Calu3 (cell line): ENCODE measurements at regions of chr6 and their contacts with region 1.

Region 1: GRCh38 chr6:27893059-27893835 is 18.9 kb downstream of the OR2B2 start:
- DNase-seq: peak; percentile 94
- H3K4me3 Mint-ChIP-seq: no peak overlapping the region
- H3K27ac Mint-ChIP-seq: no peak overlapping the region
- H3K4me1 Mint-ChIP-seq: peaks cover 19% of the 10 kb centered on the region
- H3K27me3 Mint-ChIP-seq: no peaks in the 10 kb centered on the region
- CTCF ChIP-seq: no peak

Region 2: DNA sequence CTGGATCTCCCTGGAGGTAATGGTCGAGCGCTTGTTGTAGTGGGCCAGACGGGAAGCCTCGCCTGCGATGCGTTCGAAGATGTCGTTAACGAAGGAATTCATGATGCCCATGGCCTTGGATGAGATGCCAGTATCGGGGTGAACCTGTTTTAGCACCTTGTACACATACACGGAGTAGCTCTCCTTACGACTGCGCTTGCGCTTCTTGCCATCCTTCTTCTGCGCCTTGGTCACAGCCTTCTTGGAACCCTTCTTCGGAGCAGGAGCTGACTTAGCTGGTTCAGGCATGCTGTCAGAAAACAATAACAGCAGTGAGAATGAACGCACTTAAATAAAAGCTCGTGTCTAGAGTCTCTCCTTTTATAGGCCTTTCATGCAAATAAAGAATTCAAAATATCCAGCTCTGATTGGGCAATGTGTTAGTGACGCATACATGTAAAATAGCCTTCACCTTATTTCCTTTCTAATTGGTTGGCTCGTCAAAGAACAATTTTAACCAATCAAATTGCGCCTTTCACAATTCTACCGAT is 1676.8 kb before region 1 on chr6:
- CTCF ChIA-PET with region 1: no interaction called
- intact Hi-C with region 1: loop called (anchors 5 kb)
- DNase-seq: peak; percentile 86
- H3K4me3 Mint-ChIP-seq: no peak overlapping the region
- H3K27ac Mint-ChIP-seq: no peak overlapping the region
- H3K4me1 Mint-ChIP-seq: peaks cover 53% of the 10 kb centered on the region
- H3K27me3 Mint-ChIP-seq: no peaks in the 10 kb centered on the region
- CTCF ChIP-seq: no peak

Region 3: DNA sequence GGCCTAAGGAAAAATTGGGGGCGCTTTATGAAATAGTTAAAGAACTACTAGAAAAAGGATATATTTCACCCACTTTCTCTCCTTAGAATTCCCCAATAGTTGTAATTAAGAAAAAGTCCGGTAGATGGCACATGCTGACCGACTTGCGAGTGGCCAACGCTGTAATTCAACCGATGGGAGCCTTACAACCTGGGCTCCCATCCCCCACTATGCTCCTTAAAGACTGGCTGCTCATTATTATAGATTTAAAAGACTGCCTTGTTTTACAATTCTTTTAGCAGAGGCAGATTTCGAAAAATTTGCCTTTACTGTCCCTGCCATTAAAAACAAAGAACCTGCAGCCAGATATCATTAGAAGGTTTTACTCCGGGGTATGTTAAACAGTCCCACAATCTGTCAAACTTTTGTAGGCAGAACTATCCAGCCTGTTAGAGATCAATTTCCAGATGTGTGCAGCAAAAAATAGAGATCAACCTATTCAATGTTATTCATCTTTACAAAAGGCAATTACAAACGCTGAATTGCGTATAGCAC is 704.3 kb before region 1 on chr6:
- CTCF ChIA-PET with region 1: no interaction called
- intact Hi-C with region 1: loop called (anchors 5 kb)
- DNase-seq: peak; percentile 79
- H3K4me3 Mint-ChIP-seq: peak overlapping the region; percentile 78
- H3K27ac Mint-ChIP-seq: peak overlapping the region; percentile 55
- H3K4me1 Mint-ChIP-seq: peaks cover 9% of the 10 kb centered on the region
- H3K27me3 Mint-ChIP-seq: no peaks in the 10 kb centered on the region
- CTCF ChIP-seq: peak; percentile 71

Region 4: DNA sequence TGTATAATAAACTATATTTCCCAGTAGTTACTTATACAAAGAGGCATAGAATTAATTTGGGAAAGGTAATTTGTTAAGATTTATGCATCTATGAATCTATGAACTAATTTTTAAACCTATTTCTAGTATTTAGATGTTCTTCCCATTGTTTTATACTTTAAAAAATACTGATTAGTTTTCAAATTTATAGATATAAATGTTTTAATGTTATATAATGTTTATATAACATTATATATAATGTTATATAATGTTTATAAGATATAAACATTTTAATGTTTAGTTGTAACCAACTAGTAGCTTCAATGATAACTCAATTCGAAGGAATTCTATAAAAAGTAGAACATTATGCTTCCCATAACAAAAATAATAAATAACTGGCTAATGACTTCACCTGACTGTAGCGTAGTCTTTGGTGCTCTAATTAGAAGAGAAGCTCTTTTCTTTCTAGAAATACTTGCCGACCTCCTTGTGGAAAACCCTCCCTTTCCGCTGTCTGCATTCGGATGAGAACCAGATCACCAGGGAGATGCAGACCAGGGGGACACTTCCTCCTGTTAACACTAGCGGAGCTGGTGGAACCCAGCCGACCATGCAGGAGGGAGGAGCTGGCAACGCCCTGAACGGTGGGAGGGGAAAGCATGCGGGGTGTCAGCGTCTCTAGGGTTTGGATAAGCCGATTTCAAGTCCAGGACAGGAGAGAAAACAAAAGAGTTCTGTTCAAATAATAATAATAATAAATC is 139.4 kb before region 1 on chr6:
- CTCF ChIA-PET with region 1: interaction called, 5 read pairs
- intact Hi-C with region 1: loop called (anchors 5 kb)
- DNase-seq: peak; percentile 87
- H3K4me3 Mint-ChIP-seq: peak overlapping the region; percentile 79
- H3K27ac Mint-ChIP-seq: peak overlapping the region; percentile 88
- H3K4me1 Mint-ChIP-seq: peaks cover 33% of the 10 kb centered on the region
- H3K27me3 Mint-ChIP-seq: no peaks in the 10 kb centered on the region
- CTCF ChIP-seq: no peak

Region 5: DNA sequence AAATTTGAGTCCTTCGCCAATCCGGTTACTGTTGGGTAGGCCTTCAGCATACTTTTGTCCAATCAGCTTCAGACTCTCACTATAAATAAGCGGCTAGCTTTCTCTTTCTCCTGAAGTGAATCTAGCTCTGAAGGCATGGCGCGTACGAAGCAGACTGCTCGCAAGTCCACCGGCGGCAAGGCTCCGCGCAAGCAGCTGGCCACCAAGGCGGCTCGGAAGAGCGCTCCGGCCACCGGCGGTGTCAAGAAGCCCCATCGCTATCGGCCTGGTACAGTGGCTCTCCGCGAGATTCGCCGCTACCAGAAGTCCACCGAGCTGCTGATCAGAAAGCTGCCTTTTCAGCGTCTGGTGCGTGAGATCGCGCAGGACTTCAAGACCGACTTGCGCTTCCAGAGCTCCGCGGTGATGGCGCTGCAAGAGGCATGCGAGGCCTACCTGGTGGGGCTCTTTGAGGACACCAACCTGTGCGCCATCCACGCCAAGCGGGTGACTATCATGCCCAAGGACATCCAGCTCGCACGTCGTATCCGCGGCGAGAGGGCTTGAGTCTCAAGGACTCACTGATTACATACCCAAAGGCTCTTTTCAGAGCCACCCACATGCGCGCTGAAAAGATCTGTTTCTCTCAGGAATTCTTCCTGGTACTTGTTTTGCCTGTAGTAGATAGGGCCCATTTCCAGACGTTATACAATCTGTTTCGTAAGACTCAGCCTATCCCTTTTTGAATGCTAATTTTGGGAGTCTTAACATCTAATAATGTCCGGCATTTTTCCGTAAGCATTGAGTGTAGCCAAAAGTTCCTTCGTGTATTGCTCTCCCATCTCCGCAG is 83.1 kb before region 1 on chr6:
- CTCF ChIA-PET with region 1: interaction called, 23 read pairs
- intact Hi-C with region 1: loop called (anchors 2 kb)
- DNase-seq: peak; percentile 87
- H3K4me3 Mint-ChIP-seq: peak overlapping the region; percentile 89
- H3K27ac Mint-ChIP-seq: peak overlapping the region; percentile 99
- H3K4me1 Mint-ChIP-seq: peaks cover 22% of the 10 kb centered on the region
- H3K27me3 Mint-ChIP-seq: no peaks in the 10 kb centered on the region
- CTCF ChIP-seq: no peak

Region 6: GRCh38 chr6:27864906-27865849 is 28.1 kb before region 1 on chr6:
- CTCF ChIA-PET with region 1: interaction called, 6 read pairs
- intact Hi-C with region 1: loop called (anchors 1 kb)
- DNase-seq: peak; percentile 76
- H3K4me3 Mint-ChIP-seq: peak overlapping the region; percentile 92
- H3K27ac Mint-ChIP-seq: peak overlapping the region; percentile 80
- H3K4me1 Mint-ChIP-seq: peaks cover 23% of the 10 kb centered on the region
- H3K27me3 Mint-ChIP-seq: no peaks in the 10 kb centered on the region
- CTCF ChIP-seq: no peak

Region 7: DNA sequence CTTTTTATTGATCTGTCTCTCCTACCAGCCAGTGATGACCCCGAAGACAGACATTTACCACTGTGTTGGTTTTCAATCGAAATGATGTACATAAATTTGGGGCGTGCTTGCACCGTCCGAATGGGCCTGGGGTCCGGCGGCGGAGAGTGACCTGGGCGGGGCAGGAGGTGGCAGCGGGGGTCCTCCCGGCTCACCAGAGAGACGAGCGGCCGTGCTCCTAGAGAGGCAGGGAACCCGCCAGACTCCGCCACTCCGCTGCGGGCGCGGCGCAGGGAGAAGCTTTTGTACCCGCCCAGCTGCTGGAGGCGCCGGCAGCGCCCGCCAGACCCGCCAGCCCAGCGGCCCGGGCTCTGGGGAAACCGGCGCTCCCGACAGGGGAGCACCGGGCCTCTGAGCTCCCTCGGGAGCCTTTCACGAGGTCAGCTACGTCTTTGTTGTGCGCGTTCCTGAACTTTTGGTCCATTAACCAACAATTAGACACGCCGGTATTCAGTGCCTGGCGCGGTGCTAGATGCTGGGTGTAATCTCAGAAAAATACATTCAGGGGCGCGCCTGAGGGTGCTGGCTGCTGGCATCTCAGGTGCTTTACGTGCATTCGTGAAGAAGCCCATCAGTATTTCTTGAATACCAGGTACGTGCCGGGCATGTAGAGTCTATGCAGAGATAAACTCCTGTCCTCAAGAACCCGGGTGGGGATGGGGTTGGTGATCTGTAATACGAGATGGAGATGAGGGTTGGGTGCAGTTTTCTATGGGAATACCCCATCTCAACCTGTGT is 388.2 kb after region 1 on chr6 and contains the start of gene PGBD1:
- CTCF ChIA-PET with region 1: no interaction called
- intact Hi-C with region 1: no loop called
- DNase-seq: peak; percentile 86
- H3K4me3 Mint-ChIP-seq: peak within 1 kb of the TSS; percentile 91
- H3K27ac Mint-ChIP-seq: peak within 1 kb of the TSS; percentile 53
- H3K4me1 Mint-ChIP-seq: peaks cover 10% of the 10 kb centered on the region
- H3K27me3 Mint-ChIP-seq: no peaks in the 10 kb centered on the region
- CTCF ChIP-seq: no peak
- total RNA-seq, gene PGBD1: 3.1 and 4.9 TPM in 2 replicates